Activated CD4-positive, alpha-beta T cell treated with anti-CD3 and anti-CD28 coated beads for 36 hours (primary cell): ENCODE measurements at regions of chr2 and their contacts with region 1.

Region 1: DNA sequence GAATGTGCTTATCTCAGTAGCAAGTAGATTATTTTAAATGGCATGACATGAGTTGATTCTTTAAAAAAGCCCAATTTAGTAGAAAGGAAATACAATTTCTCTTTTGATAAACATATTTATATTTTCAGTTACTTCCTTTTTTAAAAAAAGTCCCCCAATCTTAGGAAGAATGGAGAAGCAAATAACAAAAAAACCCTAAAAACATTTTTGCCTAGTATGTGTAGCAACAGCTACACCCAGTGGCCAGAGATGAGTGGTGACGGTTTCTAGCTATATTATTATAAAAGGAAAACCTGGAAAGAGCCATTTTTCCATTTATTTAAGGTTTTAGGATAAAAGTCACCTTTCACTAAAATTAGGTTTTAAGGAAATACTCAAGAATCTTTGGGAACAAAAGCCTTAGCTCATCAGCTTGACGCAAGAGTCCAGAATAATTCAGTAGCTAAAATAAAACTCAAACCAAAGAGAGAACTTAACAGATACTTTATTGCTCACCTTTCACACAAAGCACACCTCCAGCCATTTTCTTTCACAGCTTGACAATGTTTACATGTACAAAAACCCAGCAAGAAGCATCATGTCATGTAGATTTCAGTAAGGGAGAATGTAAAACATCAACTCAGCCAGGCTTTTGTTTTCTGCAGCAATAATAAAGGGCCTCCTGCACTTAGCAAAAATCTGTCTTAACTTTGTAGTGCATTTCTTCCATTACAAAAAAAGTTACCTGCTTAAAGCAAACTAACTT is 15.7 kb downstream of the FAM98A start:
- DNase-seq: peak; percentile 32
- ATAC-seq: no peak
- H3K4me3 Mint-ChIP-seq: no peak overlapping the region
- H3K27ac Mint-ChIP-seq: no peak overlapping the region
- H3K4me1 Mint-ChIP-seq: peaks cover 14% of the 10 kb centered on the region
- H3K27me3 Mint-ChIP-seq: no peaks in the 10 kb centered on the region

Region 2: GRCh38 chr2:33321236-33321771 is 262.1 kb before region 1 on chr2:
- CTCF ChIA-PET with region 1: no interaction called
- POLR2A ChIA-PET with region 1: no interaction called
- intact Hi-C with region 1: loop called in 1 of 2 experiments (anchors 5 kb)
- DNase-seq: peak; percentile 63
- ATAC-seq: peak; percentile 88
- H3K4me3 Mint-ChIP-seq: peak overlapping the region; percentile 26
- H3K27ac Mint-ChIP-seq: peak overlapping the region; percentile 84
- H3K4me1 Mint-ChIP-seq: peaks cover 26% of the 10 kb centered on the region
- H3K27me3 Mint-ChIP-seq: peaks cover 5% of the 10 kb centered on the region

Region 3: GRCh38 chr2:33395655-33396249 is 187.6 kb before region 1 on chr2:
- CTCF ChIA-PET with region 1: interaction called, 3 read pairs
- POLR2A ChIA-PET with region 1: no interaction called
- intact Hi-C with region 1: loop called in 1 of 2 experiments (anchors 5 kb)
- DNase-seq: peak; percentile 73
- ATAC-seq: no peak
- H3K4me3 Mint-ChIP-seq: no peak overlapping the region
- H3K27ac Mint-ChIP-seq: no peak overlapping the region
- H3K4me1 Mint-ChIP-seq: no peaks in the 10 kb centered on the region
- H3K27me3 Mint-ChIP-seq: no peaks in the 10 kb centered on the region

Region 4: DNA sequence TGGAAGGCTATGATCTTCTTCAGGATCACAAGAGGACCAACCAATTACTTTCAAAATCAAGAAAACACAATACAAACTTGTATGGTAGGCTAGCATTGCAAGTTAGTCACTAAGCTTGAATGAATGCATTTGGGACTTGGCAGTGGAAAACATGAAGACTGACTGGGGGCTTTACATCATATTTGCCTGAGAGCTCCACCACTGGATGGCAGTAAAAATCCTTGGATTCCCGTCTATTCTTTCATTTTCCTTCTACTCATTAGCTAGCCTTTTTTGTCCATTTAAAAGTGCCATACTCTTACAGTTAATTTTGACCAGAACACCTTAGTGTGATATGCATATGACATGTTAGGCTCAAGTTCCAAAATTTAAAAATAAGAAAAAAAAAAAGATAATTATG is 170.4 kb before region 1 on chr2:
- CTCF ChIA-PET with region 1: interaction called, 12 read pairs
- POLR2A ChIA-PET with region 1: no interaction called
- intact Hi-C with region 1: loop called (anchors 2 to 10 kb)
- DNase-seq: peak; percentile 5
- ATAC-seq: no peak
- H3K4me3 Mint-ChIP-seq: no peak overlapping the region
- H3K27ac Mint-ChIP-seq: no peak overlapping the region
- H3K4me1 Mint-ChIP-seq: no peaks in the 10 kb centered on the region
- H3K27me3 Mint-ChIP-seq: peaks cover 9% of the 10 kb centered on the region

Region 5: DNA sequence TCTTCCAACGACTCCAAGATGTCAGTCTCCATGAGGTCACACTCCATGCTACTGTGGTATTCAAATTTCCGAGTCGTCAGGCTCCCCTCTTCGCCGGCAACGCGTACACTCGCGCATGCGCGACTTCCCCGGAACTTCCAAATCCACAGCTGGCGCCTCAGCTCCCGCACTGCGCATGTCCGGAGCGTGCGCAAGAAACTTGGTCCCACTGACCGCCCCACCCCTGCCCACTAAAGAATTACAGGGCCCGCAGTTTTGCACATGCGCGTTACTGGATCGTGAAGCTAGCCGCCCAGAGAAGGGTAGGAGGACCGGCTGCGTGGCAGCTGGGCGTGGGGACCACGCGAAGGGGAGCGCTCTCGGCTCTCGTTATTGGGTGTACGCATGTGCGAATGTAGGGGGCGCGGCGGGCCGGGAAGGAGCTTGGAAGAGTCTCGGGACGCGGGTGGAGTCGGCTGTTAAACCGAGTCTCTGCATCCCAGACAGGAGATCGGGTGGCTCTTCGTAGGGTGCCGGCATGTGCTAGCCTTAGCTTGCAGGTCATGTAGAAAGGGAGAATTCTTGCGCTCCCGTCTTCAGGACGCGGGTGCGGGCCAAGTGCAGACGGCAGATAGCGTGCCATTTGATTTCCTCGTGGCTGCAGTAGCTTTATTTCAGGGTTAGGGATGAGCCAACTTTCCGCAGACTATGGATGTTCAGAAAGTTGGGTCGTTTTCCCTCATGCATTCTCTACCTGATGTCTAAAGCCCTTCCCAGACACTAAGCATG is 16.0 kb after region 1 on chr2 and contains the start of gene FAM98A:
- CTCF ChIA-PET with region 1: interaction called, 26 read pairs
- POLR2A ChIA-PET with region 1: interaction called, 4 read pairs
- intact Hi-C with region 1: no loop called
- DNase-seq: peak; percentile 99
- ATAC-seq: peak; percentile 91
- H3K4me3 Mint-ChIP-seq: peak within 1 kb of the TSS; percentile 88
- H3K27ac Mint-ChIP-seq: peak within 1 kb of the TSS; percentile 93
- H3K4me1 Mint-ChIP-seq: peaks cover 24% of the 10 kb centered on the region
- H3K27me3 Mint-ChIP-seq: no peaks in the 10 kb centered on the region
- total RNA-seq, gene FAM98A: 42.9 to 61.5 TPM